Activated T-helper 2 cell treated with anti-CD3 and anti-CD28 coated beads, Interferon-gamma antibody, Interleukin-2, Interleukin-4, amounts not matched to agents 10 μg/mL and 5 μg/mL and 100 μg/mL, durations not matched to agents 14 hours and 24 hours and 36 hours (primary cell): ENCODE measurements at regions of chr7 and their contacts with region 1.

Region 1: GRCh38 chr7:7681179-7681935 is 37.0 kb downstream of the RPA3 start:
- DNase-seq: no peak
- H3K4me3 Mint-ChIP-seq: no peak overlapping the region
- H3K27ac Mint-ChIP-seq: peak overlapping the region; percentile 36
- H3K4me1 Mint-ChIP-seq: peaks cover 16% of the 10 kb centered on the region
- H3K27me3 Mint-ChIP-seq: no peaks in the 10 kb centered on the region

Region 2: GRCh38 chr7:7639421-7639820 is 41.9 kb before region 1 on chr7:
- intact Hi-C with region 1: no loop called
- DNase-seq: no peak
- H3K4me3 Mint-ChIP-seq: peak overlapping the region; percentile 94
- H3K27ac Mint-ChIP-seq: peak overlapping the region; percentile 99
- H3K4me1 Mint-ChIP-seq: peaks cover 31% of the 10 kb centered on the region
- H3K27me3 Mint-ChIP-seq: no peaks in the 10 kb centered on the region

Region 3: DNA sequence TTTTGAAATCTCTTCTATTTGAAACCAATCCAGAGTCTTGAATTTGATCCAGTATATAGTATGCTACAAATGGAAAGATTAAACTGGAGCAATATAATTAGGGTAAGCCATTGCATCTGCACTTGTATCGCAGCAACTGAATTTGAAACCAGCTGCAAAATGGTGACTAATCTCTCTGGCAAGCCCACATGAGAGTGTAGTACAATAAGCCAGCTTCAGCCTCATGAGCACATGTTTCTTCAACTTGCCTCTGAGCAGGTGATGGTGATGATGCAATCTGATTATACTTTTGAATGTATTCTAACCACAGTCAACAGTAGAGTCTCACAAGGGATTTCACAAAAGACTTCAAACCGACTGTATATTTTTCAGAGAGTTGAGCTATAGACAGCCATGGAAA is 37.9 kb after region 1 on chr7:
- intact Hi-C with region 1: loop called (anchors 2 kb)
- DNase-seq: peak; percentile 45
- H3K4me3 Mint-ChIP-seq: no peak overlapping the region
- H3K27ac Mint-ChIP-seq: peak overlapping the region; percentile 47
- H3K4me1 Mint-ChIP-seq: peaks cover 23% of the 10 kb centered on the region
- H3K27me3 Mint-ChIP-seq: no peaks in the 10 kb centered on the region

Region 4: DNA sequence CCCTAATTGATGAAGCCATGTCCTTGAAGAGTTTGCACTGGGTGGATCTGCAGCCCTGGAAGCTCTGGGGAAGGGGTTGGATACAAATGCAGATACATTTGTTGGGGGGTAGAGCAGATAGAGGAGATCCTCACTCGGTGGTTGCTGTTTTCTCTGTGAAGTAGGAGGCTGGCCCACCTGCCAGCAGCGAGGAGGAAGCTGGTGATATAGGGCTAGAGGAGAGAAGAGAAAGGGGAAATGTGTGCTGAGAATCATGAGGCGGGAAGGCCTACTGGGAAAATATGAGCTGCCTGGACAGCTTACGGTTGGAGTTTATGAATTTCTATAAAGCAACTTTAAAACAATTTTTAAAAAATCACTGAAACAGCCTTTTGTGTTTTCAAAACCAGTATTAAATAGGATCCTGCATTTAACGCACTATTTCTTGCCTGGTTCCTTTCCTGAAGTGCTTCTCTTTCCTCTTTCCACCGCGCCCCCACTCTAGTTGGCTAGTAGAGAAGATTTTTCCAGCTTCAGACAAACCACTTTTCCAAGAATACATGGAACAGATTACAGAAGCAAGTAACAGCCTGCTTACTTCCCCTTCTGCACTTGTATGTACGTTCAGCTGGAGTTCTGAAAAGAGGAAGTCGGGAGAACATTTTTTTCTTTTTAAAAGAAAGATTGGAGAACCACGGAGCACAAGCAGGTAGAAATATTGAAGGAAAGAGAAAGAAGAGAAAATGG is 186.7 kb after region 1 on chr7:
- intact Hi-C with region 1: no loop called
- DNase-seq: no peak
- H3K4me3 Mint-ChIP-seq: no peak overlapping the region
- H3K27ac Mint-ChIP-seq: no peak overlapping the region
- H3K4me1 Mint-ChIP-seq: no peaks in the 10 kb centered on the region
- H3K27me3 Mint-ChIP-seq: no peaks in the 10 kb centered on the region

Region 5: GRCh38 chr7:8042796-8043535 is 361.6 kb after region 1 on chr7:
- intact Hi-C with region 1: loop called (anchors 5 kb)
- DNase-seq: no peak
- H3K4me3 Mint-ChIP-seq: no peak overlapping the region
- H3K27ac Mint-ChIP-seq: peak overlapping the region; percentile 49
- H3K4me1 Mint-ChIP-seq: peaks cover 56% of the 10 kb centered on the region
- H3K27me3 Mint-ChIP-seq: no peaks in the 10 kb centered on the region

Region 6: DNA sequence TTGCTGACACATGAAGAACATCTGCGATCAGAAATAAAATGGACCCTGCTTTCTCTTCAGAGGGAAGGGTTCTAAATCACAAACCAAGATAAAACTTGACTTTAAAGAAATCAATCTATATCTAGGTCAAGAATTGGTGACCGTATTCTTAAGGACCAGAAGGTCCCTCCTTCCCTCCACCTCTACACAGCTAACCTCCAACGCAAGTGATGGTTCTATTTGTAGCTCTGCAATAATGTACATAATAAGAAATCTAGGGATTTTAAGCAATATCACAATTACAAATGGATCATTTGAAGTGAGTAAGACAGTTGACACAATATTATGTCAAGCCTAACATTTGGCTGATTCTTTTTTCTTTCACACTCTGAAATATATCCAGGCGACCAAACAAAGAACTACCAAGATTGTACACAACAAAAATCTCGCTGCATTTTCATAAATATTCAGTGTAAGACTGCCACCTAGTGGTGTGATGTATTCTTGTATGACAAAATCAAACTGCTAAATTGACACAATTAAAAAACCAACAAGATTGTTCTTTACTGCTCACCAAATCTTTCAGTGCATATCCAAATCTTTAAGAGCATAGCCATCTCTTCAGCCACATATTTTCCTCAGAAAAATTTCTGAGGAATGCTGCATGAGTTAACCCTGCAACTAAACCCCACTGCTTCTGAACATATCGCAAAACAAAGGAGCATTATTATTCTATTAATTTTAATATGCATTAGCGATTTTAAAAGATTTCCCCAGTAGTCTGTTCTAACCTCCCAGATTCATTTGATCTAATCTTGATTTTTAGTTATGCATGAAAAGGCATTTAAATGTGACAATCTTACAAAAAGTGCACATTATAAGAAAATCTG is 536.1 kb after region 1 on chr7:
- intact Hi-C with region 1: loop called (anchors 1 kb)
- DNase-seq: no peak
- H3K4me3 Mint-ChIP-seq: no peak overlapping the region
- H3K27ac Mint-ChIP-seq: no peak overlapping the region
- H3K4me1 Mint-ChIP-seq: peaks cover 34% of the 10 kb centered on the region
- H3K27me3 Mint-ChIP-seq: no peaks in the 10 kb centered on the region